ENCODE measurements at regions of chr16 and their contacts with region 1.

Region 1: DNA sequence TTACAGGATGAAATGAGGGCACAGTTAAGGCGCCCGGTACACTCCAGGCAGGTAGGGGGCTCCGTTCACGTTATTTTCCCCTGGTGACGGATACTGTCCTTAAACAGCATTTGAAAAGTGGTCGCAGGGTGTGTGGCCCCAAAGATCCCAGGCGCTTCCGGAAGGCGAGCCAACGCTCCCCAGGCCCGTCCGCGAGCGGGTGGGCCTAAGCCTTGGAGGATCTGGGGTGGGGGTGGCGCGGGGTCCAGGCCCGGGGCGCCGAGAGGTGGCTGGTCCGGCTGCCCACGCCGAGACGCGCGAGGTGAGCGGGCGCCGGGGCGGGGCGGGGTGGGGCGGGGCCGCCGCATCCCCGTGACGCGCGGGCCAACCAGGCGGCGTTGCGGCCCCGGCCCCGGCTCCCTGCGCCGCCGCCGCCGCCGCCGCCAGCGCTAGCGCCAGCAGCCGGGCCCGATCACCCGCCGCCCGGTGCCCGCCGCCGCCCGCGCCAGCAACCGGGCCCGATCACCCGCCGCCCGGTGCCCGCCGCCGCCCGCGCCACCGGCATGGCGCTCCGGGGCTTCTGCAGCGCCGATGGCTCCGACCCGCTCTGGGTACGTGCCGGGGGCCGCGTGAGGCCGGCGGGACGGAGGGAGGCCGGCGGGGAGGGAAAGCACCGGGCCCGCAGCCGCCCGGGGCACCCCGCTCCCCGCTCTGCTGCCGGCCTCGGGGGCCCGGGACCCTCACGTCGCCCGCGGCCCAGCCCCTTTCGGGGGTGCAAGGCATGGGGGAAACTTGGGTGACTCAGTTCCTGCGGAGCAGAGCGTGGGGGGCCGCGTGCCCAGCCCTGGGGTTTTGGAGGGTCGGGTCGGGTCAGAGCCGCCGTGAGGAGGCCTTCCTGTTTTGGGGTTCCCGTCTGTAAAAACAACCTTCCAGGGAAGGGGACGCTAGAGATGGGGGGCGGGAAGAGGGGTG is at the start of gene ABCC1:
- DNase-seq: peak; percentile 67
- ATAC-seq: peak; percentile 85
- total RNA-seq, gene ABCC1: 24.4 TPM

Region 2: DNA sequence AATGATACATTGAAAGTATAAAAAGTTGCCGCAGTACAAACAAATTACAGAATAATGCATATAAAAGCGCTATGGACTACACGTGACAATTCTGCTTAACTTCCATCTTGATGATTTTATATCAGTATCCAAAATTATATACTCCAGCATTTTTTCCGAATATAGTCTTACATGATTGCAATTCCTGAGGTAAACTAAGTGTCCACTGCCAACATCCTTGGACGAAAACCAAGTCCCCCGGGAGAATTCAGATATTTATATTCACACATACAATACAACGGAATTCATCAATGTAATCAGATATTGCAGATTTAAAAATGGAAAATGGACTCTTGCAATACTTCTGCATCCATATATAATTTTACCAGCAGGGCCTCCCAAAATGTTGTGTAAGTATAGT is 83.7 kb before region 1 on chr16:
- intact Hi-C with region 1: no loop called
- DNase-seq: no peak
- ATAC-seq: no peak

Region 3: DNA sequence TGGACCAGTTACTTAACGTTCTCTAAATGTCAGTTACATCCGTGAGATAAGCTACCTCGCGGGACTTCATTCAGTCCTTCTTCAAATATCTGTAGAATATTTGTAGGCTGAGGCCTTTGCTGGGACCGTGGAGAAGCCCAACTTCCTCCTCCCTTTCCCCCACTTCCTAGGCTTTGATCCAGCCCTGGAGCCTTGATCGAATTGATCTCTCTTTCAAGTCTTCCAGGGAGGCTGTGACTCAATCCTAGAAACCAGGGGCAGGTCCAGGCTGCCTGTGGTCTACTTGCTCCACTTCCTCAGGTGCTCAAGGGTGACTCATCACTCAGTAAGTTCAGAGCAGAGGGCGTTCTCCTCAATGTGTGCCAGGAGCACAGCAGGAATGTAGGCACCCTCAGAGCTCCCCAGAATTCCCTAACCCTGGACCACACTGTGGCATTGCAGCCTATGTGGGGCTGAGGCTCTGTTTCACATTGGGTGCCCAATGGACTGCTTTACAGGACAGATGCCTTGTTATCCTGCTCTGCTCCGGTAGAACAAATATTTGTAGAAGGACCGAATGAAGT is 49.9 kb before region 1 on chr16:
- intact Hi-C with region 1: loop called (anchors 5 kb)
- DNase-seq: no peak
- ATAC-seq: no peak

Region 4: GRCh38 chr16:16014329-16015144 is 65.1 kb after region 1 on chr16:
- intact Hi-C with region 1: loop called (anchors 5 kb)
- DNase-seq: peak; percentile 82
- ATAC-seq: peak; percentile 82